Activated CD8-positive, alpha-beta memory T cell treated with anti-CD3 and anti-CD28 coated beads, Interleukin-2, amount 10 ng/mL, durations not matched to agents 7 days and 5 days (primary cell): ENCODE measurements at regions of chr5 and their contacts with region 1.

Region 1: GRCh38 chr5:140372971-140373487 is 13.0 kb downstream of the SLC4A9 start:
- DNase-seq: peak; percentile 58
- ATAC-seq: peak; percentile 68
- H3K4me3 Mint-ChIP-seq: no peak overlapping the region
- H3K27ac Mint-ChIP-seq: no peak overlapping the region
- H3K4me1 Mint-ChIP-seq: peaks cover 5% of the 10 kb centered on the region
- H3K27me3 Mint-ChIP-seq: no peaks in the 10 kb centered on the region

Region 2: GRCh38 chr5:140357726-140358093 is 15.3 kb before region 1 on chr5:
- CTCF ChIA-PET with region 1: interaction called, 32 read pairs
- DNase-seq: peak; percentile 89
- ATAC-seq: peak; percentile 97
- H3K4me3 Mint-ChIP-seq: peak overlapping the region; percentile 64
- H3K27ac Mint-ChIP-seq: peak overlapping the region; percentile 56
- H3K4me1 Mint-ChIP-seq: peaks cover 19% of the 10 kb centered on the region
- H3K27me3 Mint-ChIP-seq: peaks cover 2% of the 10 kb centered on the region

Region 3: DNA sequence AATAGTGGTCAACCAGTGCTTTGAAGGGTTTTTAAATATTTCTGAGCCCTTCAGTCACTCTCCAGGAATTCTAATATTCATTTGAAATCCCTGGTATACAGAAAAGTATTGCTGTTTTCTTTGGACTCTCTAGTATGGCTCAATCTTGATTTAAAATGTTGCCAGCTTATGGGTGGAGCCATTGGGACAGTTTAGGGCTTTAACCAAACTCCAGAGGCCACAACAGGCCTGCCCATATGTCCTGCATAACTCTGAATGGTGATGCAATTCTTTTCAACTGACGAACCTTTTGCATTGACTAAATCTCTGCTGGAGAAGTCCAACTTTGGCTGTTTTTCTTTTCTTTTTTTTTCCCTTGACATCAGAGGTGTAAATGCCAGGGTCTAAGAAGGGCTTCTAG is 18.3 kb after region 1 on chr5:
- CTCF ChIA-PET with region 1: interaction called, 14 read pairs
- DNase-seq: no peak
- ATAC-seq: no peak
- H3K4me3 Mint-ChIP-seq: no peak overlapping the region
- H3K27ac Mint-ChIP-seq: no peak overlapping the region
- H3K4me1 Mint-ChIP-seq: peaks cover 3% of the 10 kb centered on the region
- H3K27me3 Mint-ChIP-seq: no peaks in the 10 kb centered on the region

Region 4: GRCh38 chr5:140401362-140402257 is 28.6 kb after region 1 on chr5 and contains the start of gene ANKHD1:
- CTCF ChIA-PET with region 1: interaction called, 12 read pairs
- DNase-seq: peak; percentile 99
- ATAC-seq: peak; percentile 85
- H3K4me3 Mint-ChIP-seq: no peak within 1 kb of the TSS
- H3K27ac Mint-ChIP-seq: no peak within 1 kb of the TSS
- H3K4me1 Mint-ChIP-seq: peaks cover 36% of the 10 kb centered on the region
- H3K27me3 Mint-ChIP-seq: no peaks in the 10 kb centered on the region
- total RNA-seq, gene ANKHD1: 111 to 124 TPM

Region 5: GRCh38 chr5:140639148-140639979 is 266.3 kb after region 1 on chr5 and contains the start of gene TMCO6:
- CTCF ChIA-PET with region 1: interaction called, 34 read pairs
- DNase-seq: peak; percentile 98
- ATAC-seq: peak; percentile 96
- H3K4me3 Mint-ChIP-seq: peak within 1 kb of the TSS; percentile 94
- H3K27ac Mint-ChIP-seq: peak within 1 kb of the TSS; percentile 98
- H3K4me1 Mint-ChIP-seq: peaks cover 45% of the 10 kb centered on the region
- H3K27me3 Mint-ChIP-seq: no peaks in the 10 kb centered on the region
- total RNA-seq, gene TMCO6: 33.1 to 35.3 TPM

Region 6: DNA sequence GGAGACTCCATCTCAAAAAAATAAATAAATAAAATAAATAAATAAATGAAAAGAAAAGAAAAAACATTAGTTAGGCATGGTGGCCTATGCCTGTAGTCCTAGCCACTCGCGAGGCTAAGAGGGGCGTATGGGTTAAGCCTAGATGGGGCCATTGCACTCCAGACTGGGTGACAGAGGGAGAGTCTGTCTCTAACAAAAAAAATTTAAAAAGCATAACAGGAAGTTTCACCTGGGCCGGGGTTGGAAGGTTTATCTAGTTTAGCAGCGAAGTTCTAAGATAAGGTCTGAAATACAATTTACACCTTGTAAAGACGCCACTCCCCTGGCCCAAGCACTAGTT is 345.2 kb after region 1 on chr5:
- CTCF ChIA-PET with region 1: interaction called, 49 read pairs
- DNase-seq: no peak
- ATAC-seq: no peak
- H3K4me3 Mint-ChIP-seq: no peak overlapping the region
- H3K27ac Mint-ChIP-seq: no peak overlapping the region
- H3K4me1 Mint-ChIP-seq: peaks cover 17% of the 10 kb centered on the region
- H3K27me3 Mint-ChIP-seq: peaks cover 9% of the 10 kb centered on the region